Right ventricle myocardium inferior (tissue), 1 donor: ENCODE measurements at regions of chr7 and their contacts with region 1.

Region 1: GRCh38 chr7:17940302-17940883 is at the start of gene SNX13:
- DNase-seq: peak; percentile 97
- ATAC-seq: peak; percentile 98
- total RNA-seq, gene SNX13: 46.7 TPM

Region 2: GRCh38 chr7:17706734-17707133 is 233.7 kb before region 1 on chr7:
- intact Hi-C with region 1: loop called (anchors 10 kb)
- DNase-seq: no peak
- ATAC-seq: peak; percentile 56

Region 3: DNA sequence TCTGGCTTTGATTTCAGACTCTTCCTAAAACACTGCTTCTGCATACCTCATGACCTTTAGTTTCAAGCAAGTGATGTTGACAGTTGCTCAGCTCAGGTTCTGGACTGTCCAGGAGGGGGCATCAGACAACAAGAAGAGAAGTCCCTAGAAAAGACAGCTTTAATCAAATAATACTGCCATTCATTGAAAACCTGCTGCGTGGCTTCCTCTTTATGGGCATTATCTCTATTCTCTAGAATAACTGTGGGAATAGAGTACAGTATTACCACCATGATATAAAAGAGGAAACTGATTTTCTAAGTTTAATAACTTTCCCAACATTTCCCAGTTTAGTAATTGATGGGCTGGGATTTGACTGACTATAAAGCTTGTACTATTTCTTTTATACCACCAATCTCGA is 170.5 kb before region 1 on chr7:
- intact Hi-C with region 1: loop called (anchors 10 kb)
- DNase-seq: no peak
- ATAC-seq: peak; percentile 67

Region 4: GRCh38 chr7:17903337-17903736 is 37.1 kb before region 1 on chr7:
- intact Hi-C with region 1: loop called (anchors 5 kb)
- DNase-seq: no peak
- ATAC-seq: no peak

Region 5: DNA sequence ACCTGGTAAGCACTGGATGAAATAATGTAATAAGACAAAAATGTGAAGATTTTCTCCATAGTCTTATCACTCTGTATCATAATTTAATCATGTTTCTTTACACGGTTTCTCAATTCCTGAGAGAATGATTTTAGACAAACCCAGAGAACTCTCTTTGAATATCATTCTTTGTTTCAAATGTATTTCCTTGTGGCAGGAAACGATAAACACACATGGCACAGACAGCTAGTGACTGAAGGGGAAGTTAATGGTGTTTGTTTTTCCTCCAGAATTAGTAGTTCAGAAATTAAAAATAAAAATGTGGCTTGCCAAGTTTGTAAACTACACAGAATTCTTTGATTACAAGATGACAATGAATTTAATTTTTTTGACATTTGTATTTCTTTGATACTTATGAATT is 250.9 kb after region 1 on chr7:
- intact Hi-C with region 1: no loop called
- DNase-seq: no peak
- ATAC-seq: no peak